Gastrocnemius medialis (tissue), 4 donors: ENCODE measurements at regions of chr1 and their contacts with region 1.

Region 1: DNA sequence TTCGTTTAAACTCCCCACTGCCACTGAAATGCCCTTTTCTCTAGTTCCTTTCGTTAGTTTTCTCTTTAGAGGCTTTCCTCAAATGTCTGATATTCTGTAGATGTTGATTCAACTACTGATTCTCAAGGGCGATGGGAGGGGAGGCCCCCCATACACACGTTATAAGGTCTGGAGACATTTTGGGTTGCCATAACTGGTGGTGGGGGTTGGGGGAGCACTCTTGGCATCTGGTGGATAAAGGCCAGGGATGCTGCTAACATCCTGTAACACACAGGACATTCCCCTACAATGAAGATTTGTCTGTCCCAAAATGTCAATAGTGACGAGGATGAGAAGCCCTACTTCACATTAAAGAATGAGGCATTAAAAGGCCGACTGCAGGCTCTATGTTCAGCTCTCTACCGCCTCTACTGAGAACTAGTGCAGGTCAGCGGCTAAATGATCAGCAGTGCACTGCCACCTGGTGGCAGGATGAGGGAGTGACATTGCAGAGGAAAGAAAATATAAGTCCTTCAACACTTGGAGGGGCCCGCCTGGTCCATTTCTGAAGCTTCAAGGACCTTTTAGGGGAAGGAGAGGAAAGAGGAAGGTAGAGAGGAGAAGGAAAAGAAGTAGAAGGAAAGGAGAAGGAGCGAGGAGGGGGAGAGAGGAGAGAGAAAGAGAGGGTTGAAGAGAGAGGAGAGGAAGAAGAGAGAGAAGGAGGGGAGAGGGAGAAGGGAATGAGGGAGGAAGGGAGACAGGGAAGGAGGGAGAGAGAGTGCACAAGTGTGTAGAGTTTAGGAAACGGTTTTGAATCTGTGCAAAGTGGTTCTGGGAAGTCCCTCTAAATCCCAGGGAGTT is 29.4 kb downstream of the ALG14 start:
- DNase-seq: peak; percentile 56 to 74
- ATAC-seq: peak; percentile 83 to 93
- H3K4me3 ChIP-seq: no peak overlapping the region
- H3K27ac ChIP-seq: peak overlapping the region; percentile 0 to 47 (median 30)
- H3K4me1 ChIP-seq: peaks cover 0 to 4% of the 10 kb centered on the region in 2 donors
- H3K27me3 ChIP-seq: no peaks in the 10 kb centered on the region
- CTCF ChIP-seq: peak; percentile 88 to 97 (median 93)
- POLR2A ChIP-seq: no peak

Region 2: GRCh38 chr1:94481473-94481933 is 561.9 kb before region 1 on chr1:
- in situ Hi-C with region 1: loop called in 1 of 4 experiments (anchors 25 kb)
- intact Hi-C with region 1: no loop called
- DNase-seq: peak; percentile 9 to 32
- ATAC-seq: peak; percentile 54 to 87
- H3K4me3 ChIP-seq: no peak overlapping the region
- H3K27ac ChIP-seq: no peak overlapping the region
- H3K4me1 ChIP-seq: no peaks in the 10 kb centered on the region
- H3K27me3 ChIP-seq: no peaks in the 10 kb centered on the region
- CTCF ChIP-seq: peak; percentile 48 to 80 (median 63)
- POLR2A ChIP-seq: no peak

Region 3: DNA sequence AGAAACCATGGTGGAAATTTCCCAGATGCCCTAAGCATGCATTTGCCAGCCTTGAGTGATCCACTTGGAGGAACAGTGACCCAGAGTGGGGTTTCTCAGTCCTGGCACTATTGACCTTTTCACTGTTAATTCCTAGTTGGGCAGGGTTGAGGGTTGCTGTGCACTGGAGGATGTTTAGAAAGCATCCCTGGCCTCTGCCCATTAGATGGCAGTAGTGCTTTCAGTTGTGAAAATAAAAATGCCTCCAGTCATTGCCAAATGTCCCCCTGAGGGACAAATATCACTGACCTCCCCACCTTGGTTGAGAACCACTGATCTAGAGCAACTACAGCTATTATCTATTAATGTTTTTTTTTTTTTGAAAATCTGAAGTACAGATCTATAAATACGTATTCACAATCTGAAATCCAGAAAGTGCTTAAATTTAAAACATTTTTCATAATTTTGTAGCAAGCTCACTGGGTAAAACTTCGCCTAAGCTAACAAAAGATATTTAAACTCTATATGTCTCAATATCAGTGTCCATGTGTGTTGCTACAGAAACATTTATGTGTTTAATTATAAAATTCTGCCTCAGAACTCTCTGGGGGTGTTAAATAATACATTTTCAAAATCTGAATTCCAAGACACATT is 529.1 kb before region 1 on chr1:
- in situ Hi-C with region 1: loop called in 1 of 4 experiments (anchors 25 kb)
- intact Hi-C with region 1: no loop called
- DNase-seq: no peak
- ATAC-seq: no peak
- H3K4me3 ChIP-seq: no peak overlapping the region
- H3K27ac ChIP-seq: no peak overlapping the region
- H3K4me1 ChIP-seq: no peaks in the 10 kb centered on the region
- H3K27me3 ChIP-seq: no peaks in the 10 kb centered on the region
- CTCF ChIP-seq: peak in 3 of 5 experiments; percentile 4 to 37 (median 28)
- POLR2A ChIP-seq: no peak

Region 4: DNA sequence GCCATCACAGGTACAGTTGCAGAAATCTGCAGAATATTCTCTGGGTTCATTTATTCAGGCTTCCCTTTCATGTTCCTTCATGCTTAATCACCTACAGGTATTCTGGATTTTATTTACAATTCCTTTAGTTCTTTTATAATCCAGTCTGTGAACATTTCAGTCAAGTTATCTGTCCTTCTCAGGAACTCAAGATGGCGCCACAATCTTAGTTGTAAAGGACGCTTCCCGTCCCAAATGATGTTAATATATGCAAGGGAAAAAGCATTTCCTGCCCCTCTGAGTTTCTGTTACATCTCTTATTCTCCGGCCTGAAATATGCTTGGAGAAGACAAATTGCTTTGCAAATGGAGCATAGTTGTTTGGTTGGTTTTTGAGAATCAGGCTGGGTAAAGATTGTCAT is 521.1 kb before region 1 on chr1:
- in situ Hi-C with region 1: loop called in 1 of 4 experiments (anchors 25 kb)
- intact Hi-C with region 1: loop called (anchors 5 kb)
- DNase-seq: no peak
- ATAC-seq: peak in 1 of 2 donors; percentile 19
- H3K4me3 ChIP-seq: no peak overlapping the region
- H3K27ac ChIP-seq: no peak overlapping the region
- H3K4me1 ChIP-seq: no peaks in the 10 kb centered on the region
- H3K27me3 ChIP-seq: no peaks in the 10 kb centered on the region
- CTCF ChIP-seq: peak in 1 of 5 experiments; percentile 25
- POLR2A ChIP-seq: no peak

Region 5: GRCh38 chr1:94854458-94855306 is 188.7 kb before region 1 on chr1:
- in situ Hi-C with region 1: loop called (anchors 5 kb)
- intact Hi-C with region 1: loop called (anchors 1 kb)
- DNase-seq: peak; percentile 66 to 76
- ATAC-seq: peak; percentile 93 to 97
- H3K4me3 ChIP-seq: peak overlapping the region; percentile 49 to 67 (median 52)
- H3K27ac ChIP-seq: peak overlapping the region; percentile 39 to 67 (median 47)
- H3K4me1 ChIP-seq: peaks cover 0 to 9% of the 10 kb centered on the region in 2 donors
- H3K27me3 ChIP-seq: no peaks in the 10 kb centered on the region
- CTCF ChIP-seq: peak; percentile 80 to 89 (median 82)
- POLR2A ChIP-seq: no peak

Region 6: GRCh38 chr1:95233737-95234500 is 190.6 kb after region 1 on chr1 and contains the start of gene RWDD3:
- in situ Hi-C with region 1: no loop called
- intact Hi-C with region 1: no loop called
- DNase-seq: peak; percentile 84 to 89
- ATAC-seq: peak; percentile 89 to 93
- H3K4me3 ChIP-seq: peak within 1 kb of the TSS; percentile 75 to 99 (median 93)
- H3K27ac ChIP-seq: peak within 1 kb of the TSS; percentile 75 to 91 (median 86)
- H3K4me1 ChIP-seq: peaks cover 22 to 42% of the 10 kb centered on the region in 2 donors
- H3K27me3 ChIP-seq: no peaks in the 10 kb centered on the region
- CTCF ChIP-seq: peak; percentile 74 to 96 (median 91)
- POLR2A ChIP-seq: peak; percentile 34 to 38
- total RNA-seq, gene RWDD3: 3.2 to 12.7 (median 6.6) TPM

Region 7: GRCh38 chr1:95257758-95258157 is 214.4 kb after region 1 on chr1:
- in situ Hi-C with region 1: no loop called
- intact Hi-C with region 1: no loop called
- DNase-seq: no peak
- ATAC-seq: no peak
- H3K4me3 ChIP-seq: no peak overlapping the region
- H3K27ac ChIP-seq: no peak overlapping the region
- H3K4me1 ChIP-seq: no peaks in the 10 kb centered on the region
- H3K27me3 ChIP-seq: no peaks in the 10 kb centered on the region
- CTCF ChIP-seq: no peak
- POLR2A ChIP-seq: no peak